ENCODE measurements at regions of chr5 and their contacts with region 1.

Region 1: DNA sequence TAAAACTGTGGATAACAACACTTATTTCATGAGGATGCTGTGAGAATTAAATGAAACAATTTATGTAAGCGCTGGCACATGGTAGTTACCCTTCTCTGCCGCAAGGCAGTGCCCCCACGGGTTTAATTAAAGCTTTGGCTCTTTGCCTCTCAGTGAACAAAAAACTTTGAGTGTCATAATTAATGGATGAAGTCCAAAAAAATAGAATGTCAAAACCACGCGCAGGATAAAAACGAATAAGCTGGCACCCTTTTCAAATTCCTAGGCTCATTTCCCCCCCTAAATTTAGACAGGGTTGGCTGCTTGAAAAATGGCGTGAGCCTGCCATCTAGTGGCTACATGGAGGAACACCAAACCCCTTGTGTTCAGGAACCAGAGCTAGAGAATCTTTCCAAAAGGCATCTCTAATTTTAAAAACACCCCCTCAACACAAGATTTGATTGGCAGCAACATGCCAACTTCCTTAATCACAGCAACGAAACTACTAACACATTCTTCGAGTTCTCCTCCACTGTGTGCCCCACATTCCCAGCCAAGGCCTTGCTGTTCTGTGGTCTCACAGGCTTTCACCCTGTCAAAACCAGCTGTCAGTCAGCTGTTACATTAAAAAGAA is 29.0 kb upstream of the CCNG1 start:
- DNase-seq: peak; percentile 53

Region 2: GRCh38 chr5:163306421-163306820 is 102.0 kb before region 1 on chr5:
- CTCF ChIA-PET with region 1: interaction called, 11 read pairs
- POLR2A ChIA-PET with region 1: no interaction called
- DNase-seq: peak; percentile 8

Region 3: DNA sequence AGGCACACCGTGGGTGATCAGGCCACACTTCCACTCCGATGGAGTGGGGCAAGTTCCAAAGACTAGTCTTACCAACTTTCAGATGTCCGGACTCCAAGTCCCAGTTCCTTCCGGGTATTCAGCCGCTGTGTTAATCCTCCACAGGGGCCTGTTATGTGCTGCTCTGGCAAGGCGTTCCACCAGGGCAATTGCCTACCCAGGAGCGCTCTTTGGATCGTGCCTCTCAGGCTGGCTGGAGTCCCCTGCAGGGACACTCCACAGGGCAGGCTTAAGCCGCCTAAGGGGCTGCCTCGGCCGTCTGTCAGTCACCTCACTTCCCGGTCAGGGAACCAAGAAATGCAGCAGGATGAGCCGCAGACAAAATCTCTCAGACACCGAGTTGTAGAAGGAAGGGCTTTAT is 89.7 kb before region 1 on chr5:
- CTCF ChIA-PET with region 1: no interaction called
- POLR2A ChIA-PET with region 1: no interaction called
- DNase-seq: no peak

Region 4: GRCh38 chr5:163397354-163397753 is 11.1 kb before region 1 on chr5:
- CTCF ChIA-PET with region 1: interaction called, 12 read pairs
- POLR2A ChIA-PET with region 1: no interaction called
- DNase-seq: no peak